Transverse colon (tissue), 4 donors: ENCODE measurements at regions of chr15 and their contacts with region 1.

Region 1: GRCh38 chr15:52261498-52262242 is 33.9 kb downstream of the MYO5C start:
- DNase-seq: peak; percentile 61
- H3K4me3 ChIP-seq: no peak overlapping the region
- H3K27ac ChIP-seq: peak overlapping the region; percentile 14 to 75 (median 34)
- H3K4me1 ChIP-seq: peaks cover 0 to 17% (median 7%) of the 10 kb centered on the region in 4 donors
- H3K27me3 ChIP-seq: no peaks in the 10 kb centered on the region
- CTCF ChIP-seq: peak in 1 of 5 experiments; percentile 16
- EP300 ChIP-seq: no peak
- POLR2A ChIP-seq: no peak

Region 2: DNA sequence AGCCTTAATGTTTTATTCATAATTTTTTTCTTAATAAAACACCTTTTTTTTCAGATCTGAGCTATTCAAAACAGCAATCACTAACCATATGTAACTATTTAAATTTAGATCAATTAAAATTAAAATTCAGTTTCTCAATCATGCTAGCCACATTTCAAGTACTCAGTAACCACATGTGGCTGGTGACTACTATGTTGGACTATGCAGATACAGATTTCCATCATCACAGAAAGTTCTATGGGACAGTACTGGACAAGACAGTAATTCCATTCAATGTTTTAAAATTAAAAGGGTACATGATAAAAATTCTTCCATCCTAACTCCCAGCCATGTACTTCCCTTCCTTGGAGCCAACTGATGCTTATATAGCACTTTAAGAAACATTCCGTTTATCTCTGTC is 800.9 kb before region 1 on chr15:
- in situ Hi-C with region 1: no loop called
- intact Hi-C with region 1: no loop called
- DNase-seq: no peak
- H3K4me3 ChIP-seq: no peak overlapping the region
- H3K27ac ChIP-seq: no peak overlapping the region
- H3K4me1 ChIP-seq: no peaks in the 10 kb centered on the region
- H3K27me3 ChIP-seq: no peaks in the 10 kb centered on the region
- CTCF ChIP-seq: no peak
- EP300 ChIP-seq: no peak
- POLR2A ChIP-seq: no peak

Region 3: DNA sequence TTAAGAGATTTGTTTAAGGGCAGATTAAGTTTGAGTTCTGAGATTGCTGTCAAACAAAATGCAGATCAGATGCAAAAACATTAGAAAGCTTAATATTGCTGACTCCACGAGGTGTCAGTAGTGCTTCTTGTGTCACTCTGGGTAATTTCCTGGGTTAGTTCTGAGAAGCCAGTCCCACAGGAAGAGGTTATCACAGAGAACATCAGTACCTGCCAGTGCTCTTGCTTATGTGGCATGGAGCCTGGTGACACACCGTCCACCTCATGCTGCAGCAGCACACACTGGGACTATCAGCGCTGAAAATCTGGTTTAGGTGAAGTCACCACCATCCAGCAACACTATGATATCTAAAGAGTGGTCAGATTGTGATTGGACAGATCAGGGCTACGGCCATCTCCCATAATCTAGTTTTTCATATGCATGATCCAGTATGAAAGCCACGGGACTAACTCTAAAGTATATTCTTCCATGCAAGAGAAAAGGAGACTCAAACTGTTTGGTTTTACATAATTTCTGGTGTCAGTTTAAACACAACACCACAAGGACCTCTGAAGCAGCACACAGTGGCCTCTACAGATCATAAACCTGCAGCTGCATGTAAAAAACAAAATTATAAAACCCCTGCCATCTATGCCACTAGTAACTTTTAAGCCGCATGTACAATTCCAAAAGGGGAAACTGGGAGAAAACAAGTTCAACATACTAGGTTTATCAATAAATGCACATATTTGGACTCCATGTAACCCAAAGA is 70.0 kb after region 1 on chr15:
- in situ Hi-C with region 1: no loop called
- intact Hi-C with region 1: no loop called
- DNase-seq: peak; percentile 23
- H3K4me3 ChIP-seq: no peak overlapping the region
- H3K27ac ChIP-seq: no peak overlapping the region
- H3K4me1 ChIP-seq: no peaks in the 10 kb centered on the region
- H3K27me3 ChIP-seq: no peaks in the 10 kb centered on the region
- CTCF ChIP-seq: peak in 4 of 5 experiments; percentile 20 to 45 (median 38)
- EP300 ChIP-seq: no peak
- POLR2A ChIP-seq: no peak

Region 4: GRCh38 chr15:52584414-52584813 is 322.7 kb after region 1 on chr15:
- in situ Hi-C with region 1: loop called in 1 of 4 experiments (anchors 25 kb)
- intact Hi-C with region 1: no loop called
- DNase-seq: no peak
- H3K4me3 ChIP-seq: no peak overlapping the region
- H3K27ac ChIP-seq: no peak overlapping the region
- H3K4me1 ChIP-seq: peaks cover 0 to 4% (median 0%) of the 10 kb centered on the region in 4 donors
- H3K27me3 ChIP-seq: no peaks in the 10 kb centered on the region
- CTCF ChIP-seq: no peak
- EP300 ChIP-seq: no peak
- POLR2A ChIP-seq: no peak

Region 5: DNA sequence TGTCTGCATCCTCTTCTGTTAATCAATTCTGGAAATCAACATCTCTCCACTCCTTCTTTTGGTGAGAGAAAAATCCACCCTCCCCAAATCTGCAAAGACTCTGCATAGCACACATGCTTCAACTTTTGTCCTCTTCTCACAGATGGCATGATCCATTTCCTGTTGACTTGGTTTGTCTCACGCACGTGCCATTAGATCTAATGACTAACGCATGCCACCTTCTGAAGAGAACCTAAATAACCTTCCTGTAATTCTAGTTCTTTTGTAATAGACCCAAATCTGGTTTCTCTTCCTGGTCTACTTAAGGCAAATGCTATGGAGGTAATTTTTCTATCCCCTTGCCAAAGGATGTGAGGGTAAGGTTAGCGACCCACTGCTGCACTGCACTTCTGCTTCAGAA is 468.5 kb after region 1 on chr15:
- in situ Hi-C with region 1: loop called in 3 of 4 experiments (anchors 5 to 25 kb)
- intact Hi-C with region 1: loop called (anchors 5 kb)
- DNase-seq: no peak
- H3K4me3 ChIP-seq: no peak overlapping the region
- H3K27ac ChIP-seq: peak overlapping the region in 1 of 4 donors; percentile 7
- H3K4me1 ChIP-seq: peaks cover 0 to 13% (median 5%) of the 10 kb centered on the region in 4 donors
- H3K27me3 ChIP-seq: no peaks in the 10 kb centered on the region
- CTCF ChIP-seq: no peak
- EP300 ChIP-seq: no peak
- POLR2A ChIP-seq: no peak